Activated CD4-positive, alpha-beta T cell treated with anti-CD3 and anti-CD28 coated beads for 36 hours (primary cell): ENCODE measurements at regions of chr3 and their contacts with region 1.

Region 1: DNA sequence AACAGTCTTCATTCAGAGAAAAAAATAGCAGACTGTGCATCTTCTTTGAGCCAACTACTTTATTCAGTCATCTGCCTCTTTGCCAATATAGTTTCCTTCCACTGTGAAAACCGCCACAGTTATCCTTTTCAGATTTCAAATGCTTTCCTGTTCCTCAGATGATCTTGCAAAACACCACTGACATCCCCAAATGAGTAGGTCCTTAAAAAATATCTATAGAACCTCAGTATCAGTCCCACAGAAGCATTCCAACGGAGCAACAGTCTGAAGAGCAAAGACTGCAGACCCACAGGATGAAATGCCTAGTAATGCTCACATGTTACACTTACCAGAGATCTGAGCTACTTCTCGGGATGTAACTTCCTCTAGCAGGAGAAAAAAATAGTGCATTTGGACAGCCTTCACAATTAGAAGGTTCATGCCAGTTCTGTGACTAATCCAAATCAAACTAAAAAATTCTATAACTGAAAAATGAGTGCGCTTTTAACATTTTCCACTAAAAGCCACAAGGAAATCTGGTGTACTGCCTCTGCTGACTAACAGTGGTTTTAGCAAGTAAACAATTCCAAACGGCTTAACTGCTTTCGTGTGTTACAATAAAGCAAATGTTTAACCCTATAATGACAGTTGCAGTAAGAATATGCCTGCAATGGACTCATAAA is at the start of gene ANKRD28:
- DNase-seq: peak; percentile 17
- ATAC-seq: peak; percentile 78
- H3K4me3 Mint-ChIP-seq: peak within 1 kb of the TSS; percentile 69
- H3K27ac Mint-ChIP-seq: peak within 1 kb of the TSS; percentile 96
- H3K4me1 Mint-ChIP-seq: peaks cover 82% of the 10 kb centered on the region
- H3K27me3 Mint-ChIP-seq: no peaks in the 10 kb centered on the region
- total RNA-seq, gene ANKRD28: 27.3 to 28.4 TPM

Region 2: GRCh38 chr3:15427182-15427880 is 370.4 kb before region 1 on chr3 and contains the starts of genes EAF1 and METTL6:
- CTCF ChIA-PET with region 1: no interaction called
- POLR2A ChIA-PET with region 1: no interaction called
- intact Hi-C with region 1: loop called in 1 of 2 experiments (anchors 5 kb)
- DNase-seq: peak; percentile 92
- ATAC-seq: peak; percentile 83
- H3K4me3 Mint-ChIP-seq: peak within 1 kb of the TSS; percentile 90
- H3K27ac Mint-ChIP-seq: peak within 1 kb of the TSS; percentile 97
- H3K4me1 Mint-ChIP-seq: peaks cover 45% of the 10 kb centered on the region
- H3K27me3 Mint-ChIP-seq: no peaks in the 10 kb centered on the region
- total RNA-seq, gene EAF1: 21.2 to 25.6 TPM
- total RNA-seq, gene METTL6: 13.0 to 19.5 TPM

Region 3: DNA sequence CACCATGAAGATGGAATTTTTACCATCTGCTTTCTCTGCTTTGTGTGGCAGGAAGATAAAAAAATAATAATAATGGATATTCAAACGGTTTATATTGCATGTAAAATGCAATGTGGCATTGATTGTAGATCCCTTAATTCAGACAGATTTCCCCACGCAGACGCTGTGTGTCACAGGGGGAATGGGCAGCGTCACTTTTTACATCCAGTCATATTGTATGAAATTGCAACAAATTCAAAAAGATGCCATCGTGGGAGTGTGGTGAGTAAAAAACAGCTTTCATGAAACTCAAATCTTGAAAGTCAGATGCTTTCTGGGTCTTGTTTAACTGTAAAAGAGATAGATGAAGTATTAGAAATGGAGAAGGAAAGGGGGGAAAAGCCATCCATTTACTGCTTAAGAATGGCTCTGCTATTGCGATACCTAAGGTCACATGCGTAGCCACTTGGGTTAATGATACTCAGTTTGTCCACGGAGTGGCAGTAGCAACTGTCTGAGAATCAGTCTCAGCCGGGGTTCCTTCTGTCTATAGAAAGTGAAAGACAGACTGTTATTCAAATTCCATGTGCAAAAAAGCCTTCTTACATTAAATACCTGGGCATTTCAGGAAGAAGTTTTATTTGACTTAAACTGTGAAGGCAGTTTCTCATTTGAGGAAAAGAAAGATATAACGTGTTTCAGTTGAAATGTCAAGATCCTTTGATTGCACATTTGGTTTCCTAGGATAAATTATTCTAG is 167.7 kb before region 1 on chr3:
- CTCF ChIA-PET with region 1: interaction called, 8 read pairs
- POLR2A ChIA-PET with region 1: no interaction called
- intact Hi-C with region 1: loop called in 1 of 2 experiments (anchors 5 kb)
- DNase-seq: peak; percentile 73
- ATAC-seq: peak; percentile 96
- H3K4me3 Mint-ChIP-seq: peak overlapping the region; percentile 52
- H3K27ac Mint-ChIP-seq: peak overlapping the region; percentile 90
- H3K4me1 Mint-ChIP-seq: peaks cover 50% of the 10 kb centered on the region
- H3K27me3 Mint-ChIP-seq: no peaks in the 10 kb centered on the region

Region 4: DNA sequence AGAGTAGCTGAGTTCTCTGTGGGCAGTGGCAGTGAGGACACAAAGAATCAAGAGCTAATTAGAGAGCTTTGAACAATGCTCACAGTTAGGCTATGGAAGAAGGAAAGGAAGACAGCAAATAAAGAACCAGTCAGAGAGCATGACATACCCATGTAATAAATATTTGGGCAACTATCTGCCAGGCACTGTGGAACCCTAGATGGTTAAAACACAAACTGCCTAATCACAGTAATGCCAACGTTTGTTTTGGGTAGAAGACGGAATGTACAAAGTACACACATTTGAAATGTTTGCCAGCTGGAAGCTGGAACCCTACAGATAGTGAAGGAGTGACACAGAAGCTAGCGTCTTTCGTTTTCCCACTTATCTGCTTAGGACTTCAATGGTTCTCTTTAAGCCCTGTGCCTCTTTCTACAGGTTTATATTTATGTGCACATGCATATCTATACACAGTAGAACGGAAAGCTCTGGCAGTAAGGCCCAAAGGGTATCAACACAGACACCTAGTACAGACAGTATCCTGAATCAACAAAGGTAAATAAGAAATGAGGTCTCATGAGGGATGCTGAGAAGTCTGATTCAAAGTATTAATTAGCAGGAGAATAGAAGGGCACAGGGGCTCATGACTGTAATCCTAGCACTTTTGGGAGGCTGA is 44.6 kb before region 1 on chr3:
- CTCF ChIA-PET with region 1: no interaction called
- POLR2A ChIA-PET with region 1: no interaction called
- intact Hi-C with region 1: loop called in 1 of 2 experiments (anchors 5 kb)
- DNase-seq: no peak
- ATAC-seq: no peak
- H3K4me3 Mint-ChIP-seq: no peak overlapping the region
- H3K27ac Mint-ChIP-seq: no peak overlapping the region
- H3K4me1 Mint-ChIP-seq: peaks cover 10% of the 10 kb centered on the region
- H3K27me3 Mint-ChIP-seq: no peaks in the 10 kb centered on the region

Region 5: GRCh38 chr3:15815696-15816095 is 17.9 kb after region 1 on chr3:
- CTCF ChIA-PET with region 1: interaction called, 50 read pairs
- POLR2A ChIA-PET with region 1: no interaction called
- intact Hi-C with region 1: no loop called
- DNase-seq: no peak
- ATAC-seq: no peak
- H3K4me3 Mint-ChIP-seq: no peak overlapping the region
- H3K27ac Mint-ChIP-seq: no peak overlapping the region
- H3K4me1 Mint-ChIP-seq: peaks cover 41% of the 10 kb centered on the region
- H3K27me3 Mint-ChIP-seq: no peaks in the 10 kb centered on the region